ENCODE measurements at regions of chr10 and their contacts with region 1.

Region 1: GRCh38 chr10:32378363-32379317 is 31.7 kb upstream of the EPC1 start:
- DNase-seq: peak; percentile 93 to 95
- H3K4me3 ChIP-seq: peak overlapping the region; percentile 70
- H3K4me3 Mint-ChIP-seq: no peak overlapping the region
- H3K27ac Mint-ChIP-seq: no peak overlapping the region
- H3K4me1 ChIP-seq: peaks cover 5% of the 10 kb centered on the region; the same call in 1 of the 2 replicates
- H3K4me1 Mint-ChIP-seq: no peaks in the 10 kb centered on the region
- H3K27me3 ChIP-seq: no peaks in the 10 kb centered on the region
- H3K27me3 Mint-ChIP-seq: no peaks in the 10 kb centered on the region
- CTCF ChIP-seq: no peak

Region 2: DNA sequence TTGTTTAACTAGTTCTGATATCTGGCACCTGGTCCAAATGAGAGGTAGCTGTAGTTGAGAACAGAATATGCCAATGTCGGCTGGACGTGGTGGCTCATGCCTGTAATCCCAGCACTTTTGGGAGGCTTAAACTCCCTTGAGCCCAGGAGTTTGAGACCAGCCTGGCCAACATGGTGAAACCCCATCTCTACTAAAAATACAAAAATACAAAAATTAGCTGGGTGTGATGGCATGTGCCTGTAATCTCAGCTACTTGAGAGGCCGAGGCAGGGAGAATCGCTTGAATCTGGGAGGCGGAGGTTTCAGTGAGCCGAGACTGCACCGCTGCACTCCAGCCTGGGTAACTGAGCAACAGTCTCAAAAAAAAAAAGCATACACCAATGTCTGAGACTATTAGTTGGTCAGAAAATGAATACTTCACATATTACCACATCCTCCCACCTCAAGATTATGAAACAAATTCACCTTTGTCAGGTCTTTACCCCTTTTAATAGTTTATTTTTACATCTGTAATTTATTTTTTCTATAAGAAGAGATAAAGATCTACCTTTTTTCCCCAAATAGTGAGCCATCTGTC is 70.5 kb before region 1 on chr10:
- CTCF ChIA-PET with region 1: no interaction called
- POLR2A ChIA-PET with region 1: no interaction called
- intact Hi-C with region 1: no loop called
- DNase-seq: no peak
- H3K4me3 ChIP-seq: no peak overlapping the region
- H3K4me3 Mint-ChIP-seq: no peak overlapping the region
- H3K27ac Mint-ChIP-seq: no peak overlapping the region
- H3K4me1 ChIP-seq: peaks cover 14% of the 10 kb centered on the region
- H3K4me1 Mint-ChIP-seq: peaks cover 10% of the 10 kb centered on the region
- H3K27me3 ChIP-seq: no peaks in the 10 kb centered on the region
- H3K27me3 Mint-ChIP-seq: no peaks in the 10 kb centered on the region
- CTCF ChIP-seq: no peak

Region 3: GRCh38 chr10:32445740-32446535 is 67.3 kb after region 1 on chr10 and contains the start of gene CCDC7:
- CTCF ChIA-PET with region 1: interaction called, 4 read pairs
- POLR2A ChIA-PET with region 1: interaction called, 3 read pairs
- intact Hi-C with region 1: loop called (anchors 2 kb)
- DNase-seq: peak; percentile 83 to 91
- H3K4me3 ChIP-seq: peak within 1 kb of the TSS; percentile 59
- H3K4me3 Mint-ChIP-seq: peak within 1 kb of the TSS; percentile 73
- H3K27ac Mint-ChIP-seq: peak within 1 kb of the TSS; percentile 92
- H3K4me1 ChIP-seq: 0 out of 2 replicates have a peak, but pooled peaks cover 5% of the 10 kb centered on the region
- H3K4me1 Mint-ChIP-seq: no peaks in the 10 kb centered on the region
- H3K27me3 ChIP-seq: no peaks in the 10 kb centered on the region
- H3K27me3 Mint-ChIP-seq: no peaks in the 10 kb centered on the region
- CTCF ChIP-seq: peak; percentile 30 to 60
- total RNA-seq, gene CCDC7: 0.72 and 1.2 TPM in 2 replicates